PC-9 (cell line): ENCODE measurements at regions of chr4 and their contacts with region 1.

Region 1: GRCh38 chr4:48127682-48128394 is 6.2 kb downstream of the TXK start:
- DNase-seq: peak; percentile 84 to 94
- H3K4me3 ChIP-seq: peak overlapping the region; percentile 40; the same call in 1 of the 2 replicates
- H3K27ac ChIP-seq: peak overlapping the region; percentile 74
- H3K4me1 ChIP-seq: peaks cover 59% of the 10 kb centered on the region
- H3K27me3 ChIP-seq: no peaks in the 10 kb centered on the region
- CTCF ChIP-seq: peak; percentile 63

Region 2: DNA sequence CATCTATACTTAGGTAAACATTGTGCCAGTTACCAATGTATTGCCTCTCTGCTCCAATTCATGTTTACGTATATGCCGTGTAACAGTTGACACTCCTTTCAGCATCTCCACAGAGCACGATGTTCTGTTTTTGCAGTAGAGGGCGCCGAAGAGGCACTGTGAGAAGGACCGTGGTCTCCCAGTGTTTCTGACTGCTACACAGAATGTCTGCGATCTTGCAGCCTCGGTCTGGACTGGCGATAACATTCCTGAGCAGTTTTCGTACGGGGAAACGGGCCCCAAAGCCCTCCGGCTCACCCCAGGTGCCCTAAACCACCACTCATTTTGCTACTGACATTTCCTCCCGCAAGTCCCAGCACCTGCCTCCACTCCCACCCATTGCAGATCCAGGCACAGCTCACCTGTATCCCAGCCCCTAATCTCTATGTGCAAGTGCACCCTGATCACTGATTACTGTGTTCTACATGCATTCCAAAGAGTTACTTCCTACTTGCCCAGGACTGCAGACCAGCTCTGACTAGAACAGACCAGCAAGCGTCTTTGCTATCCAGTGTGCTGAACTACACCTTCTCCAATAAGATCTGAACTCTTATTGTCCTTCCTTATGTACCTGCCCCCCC is 201.1 kb before region 1 on chr4:
- CTCF ChIA-PET with region 1: interaction called, 15 read pairs
- POLR2A ChIA-PET with region 1: no interaction called
- intact Hi-C with region 1: no loop called
- DNase-seq: peak in 1 of 2 experiments; percentile 18
- H3K4me3 ChIP-seq: no peak overlapping the region
- H3K27ac ChIP-seq: no peak overlapping the region
- H3K4me1 ChIP-seq: no peaks in the 10 kb centered on the region
- H3K27me3 ChIP-seq: no peaks in the 10 kb centered on the region
- CTCF ChIP-seq: peak; percentile 40

Region 3: GRCh38 chr4:47972181-47972580 is 155.7 kb before region 1 on chr4:
- CTCF ChIA-PET with region 1: no interaction called
- POLR2A ChIA-PET with region 1: no interaction called
- intact Hi-C with region 1: no loop called
- DNase-seq: no peak
- H3K4me3 ChIP-seq: no peak overlapping the region
- H3K27ac ChIP-seq: no peak overlapping the region; the same call in 1 of the 2 replicates
- H3K4me1 ChIP-seq: peaks cover 18% of the 10 kb centered on the region
- H3K27me3 ChIP-seq: no peaks in the 10 kb centered on the region
- CTCF ChIP-seq: no peak

Region 4: GRCh38 chr4:48093949-48094550 is 33.8 kb before region 1 on chr4:
- CTCF ChIA-PET with region 1: no interaction called
- POLR2A ChIA-PET with region 1: interaction called, 3 read pairs
- intact Hi-C with region 1: loop called (anchors 1 kb)
- DNase-seq: peak; percentile 74 to 86
- H3K4me3 ChIP-seq: no peak overlapping the region
- H3K27ac ChIP-seq: peak overlapping the region; percentile 62
- H3K4me1 ChIP-seq: peaks cover 18% of the 10 kb centered on the region
- H3K27me3 ChIP-seq: no peaks in the 10 kb centered on the region
- CTCF ChIP-seq: no peak

Region 5: DNA sequence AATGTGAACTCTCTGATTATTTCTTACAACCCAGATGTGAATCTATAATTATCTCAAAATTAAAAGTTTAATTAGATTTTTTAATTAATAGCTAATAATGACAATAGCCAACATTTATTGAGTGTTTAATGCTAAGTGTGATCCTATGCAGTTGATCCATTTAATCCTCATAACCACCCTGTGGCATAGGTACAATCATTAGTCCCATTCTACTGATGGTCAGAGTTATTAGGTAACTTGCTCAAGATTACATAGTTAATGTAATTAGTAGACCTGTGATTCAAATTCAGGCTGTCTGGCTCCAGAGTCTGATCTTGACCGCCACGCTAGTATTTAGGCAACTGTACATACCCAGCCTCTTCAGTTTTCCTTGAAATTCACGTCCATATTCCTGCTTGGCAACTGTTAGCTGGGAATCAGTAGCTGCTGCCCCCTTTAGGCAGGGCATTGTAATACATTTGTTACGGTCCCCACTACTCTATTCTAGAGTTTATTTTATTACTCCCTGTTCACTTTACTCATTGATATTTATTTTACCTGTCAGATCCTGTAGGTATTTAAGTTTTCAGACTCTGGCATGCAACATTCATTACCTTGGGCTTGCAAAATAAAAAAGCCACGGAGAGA is 162.4 kb after region 1 on chr4:
- CTCF ChIA-PET with region 1: no interaction called
- POLR2A ChIA-PET with region 1: no interaction called
- intact Hi-C with region 1: loop called (anchors 1 kb)
- DNase-seq: peak; percentile 22 to 37
- H3K4me3 ChIP-seq: no peak overlapping the region
- H3K27ac ChIP-seq: no peak overlapping the region
- H3K4me1 ChIP-seq: no peaks in the 10 kb centered on the region
- H3K27me3 ChIP-seq: no peaks in the 10 kb centered on the region
- CTCF ChIP-seq: peak; percentile 75

Region 6: GRCh38 chr4:48642421-48643374 is 514.9 kb after region 1 on chr4:
- CTCF ChIA-PET with region 1: no interaction called
- POLR2A ChIA-PET with region 1: no interaction called
- intact Hi-C with region 1: no loop called
- DNase-seq: no peak
- H3K4me3 ChIP-seq: no peak overlapping the region
- H3K27ac ChIP-seq: no peak overlapping the region
- H3K4me1 ChIP-seq: no peaks in the 10 kb centered on the region
- H3K27me3 ChIP-seq: no peaks in the 10 kb centered on the region
- CTCF ChIP-seq: no peak

Region 7: DNA sequence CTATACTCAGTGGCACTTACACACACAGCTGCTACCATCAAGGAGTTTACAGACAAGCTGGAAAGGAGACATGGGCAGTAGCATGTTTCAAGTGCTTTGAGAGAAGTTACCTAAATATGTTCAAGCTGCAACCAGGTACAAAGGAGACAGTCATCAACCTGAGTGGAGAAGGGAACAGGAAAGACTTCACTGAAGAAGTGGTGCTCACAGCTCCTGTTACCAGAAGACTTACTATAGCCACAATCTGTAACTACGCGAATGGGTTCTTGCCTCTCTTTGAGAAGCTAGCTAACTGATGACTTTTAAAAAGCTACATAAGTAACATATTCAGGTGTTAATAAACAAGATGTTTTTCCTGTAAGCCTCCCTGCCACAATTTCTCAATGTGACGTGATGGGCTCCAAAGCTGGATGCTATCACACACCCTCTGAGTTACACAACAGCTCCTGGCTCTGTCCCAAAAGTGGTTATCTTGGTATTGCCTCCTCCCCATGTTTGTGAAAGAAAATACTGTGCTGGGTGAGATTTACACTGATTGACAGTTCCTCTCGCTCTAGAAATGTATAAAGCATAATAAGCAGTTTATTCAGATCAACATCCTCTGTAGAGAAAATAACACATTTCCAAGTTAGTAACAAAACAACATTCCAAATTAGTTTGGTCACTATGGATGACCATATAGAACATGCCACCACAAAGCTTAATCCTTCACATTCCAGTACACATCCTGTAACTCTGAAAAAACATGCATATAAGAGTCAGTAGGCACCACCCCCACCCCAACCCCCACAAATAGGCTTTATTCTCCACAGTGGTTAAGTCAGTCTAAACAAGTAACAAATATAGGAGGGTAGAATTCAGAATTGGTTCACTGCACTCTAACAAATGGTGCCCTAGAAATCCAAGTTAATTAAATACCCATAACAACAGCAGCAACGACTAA is 570.5 kb after region 1 on chr4:
- CTCF ChIA-PET with region 1: no interaction called
- POLR2A ChIA-PET with region 1: no interaction called
- intact Hi-C with region 1: loop called (anchors 10 kb)
- DNase-seq: peak; percentile 76 to 90
- H3K4me3 ChIP-seq: peak overlapping the region; percentile 49; the same call in 1 of the 2 replicates
- H3K27ac ChIP-seq: peak overlapping the region; percentile 89
- H3K4me1 ChIP-seq: peaks cover 48% of the 10 kb centered on the region
- H3K27me3 ChIP-seq: no peaks in the 10 kb centered on the region
- CTCF ChIP-seq: no peak